Adrenal gland (tissue), 19 donors: ENCODE measurements at regions of chr7 and their contacts with region 1.

Region 1: DNA sequence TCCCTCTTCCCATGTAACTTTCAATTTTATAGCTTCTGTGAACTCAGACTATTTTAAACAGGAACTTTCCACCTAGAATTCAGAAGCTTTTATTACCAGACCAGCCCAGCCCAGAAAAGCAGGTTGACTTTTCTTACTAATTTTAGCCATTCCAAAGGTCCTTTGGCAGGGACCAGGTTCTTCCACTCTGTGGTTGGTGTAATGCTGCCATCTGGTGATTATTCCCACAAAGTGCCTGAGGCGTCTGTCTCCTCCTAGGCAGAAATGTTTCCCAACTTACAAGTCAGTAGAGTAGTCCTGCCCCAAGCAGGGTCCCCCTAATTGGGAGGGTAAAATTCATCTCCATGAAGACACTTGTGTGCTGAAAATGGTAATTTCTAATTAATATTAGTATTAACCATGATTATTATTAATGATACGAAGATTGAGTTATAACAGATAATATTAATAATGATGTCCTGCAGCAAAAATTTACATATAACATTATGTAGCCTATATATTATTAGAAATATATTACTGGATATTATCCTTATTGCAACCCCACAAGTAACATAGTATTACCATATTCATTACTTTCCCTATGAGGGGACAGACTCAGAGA is 53.0 kb upstream of the PPP1R17 start:
- DNase-seq: peak; percentile 40 to 74 (median 48)
- H3K4me3 ChIP-seq: no peak overlapping the region
- H3K27ac ChIP-seq: no peak overlapping the region
- H3K4me1 ChIP-seq: no peaks in the 10 kb centered on the region
- H3K27me3 ChIP-seq: no peaks in the 10 kb centered on the region
- CTCF ChIP-seq: peak; percentile 36 to 61 (median 55)
- POLR2A ChIP-seq: no peak

Region 2: DNA sequence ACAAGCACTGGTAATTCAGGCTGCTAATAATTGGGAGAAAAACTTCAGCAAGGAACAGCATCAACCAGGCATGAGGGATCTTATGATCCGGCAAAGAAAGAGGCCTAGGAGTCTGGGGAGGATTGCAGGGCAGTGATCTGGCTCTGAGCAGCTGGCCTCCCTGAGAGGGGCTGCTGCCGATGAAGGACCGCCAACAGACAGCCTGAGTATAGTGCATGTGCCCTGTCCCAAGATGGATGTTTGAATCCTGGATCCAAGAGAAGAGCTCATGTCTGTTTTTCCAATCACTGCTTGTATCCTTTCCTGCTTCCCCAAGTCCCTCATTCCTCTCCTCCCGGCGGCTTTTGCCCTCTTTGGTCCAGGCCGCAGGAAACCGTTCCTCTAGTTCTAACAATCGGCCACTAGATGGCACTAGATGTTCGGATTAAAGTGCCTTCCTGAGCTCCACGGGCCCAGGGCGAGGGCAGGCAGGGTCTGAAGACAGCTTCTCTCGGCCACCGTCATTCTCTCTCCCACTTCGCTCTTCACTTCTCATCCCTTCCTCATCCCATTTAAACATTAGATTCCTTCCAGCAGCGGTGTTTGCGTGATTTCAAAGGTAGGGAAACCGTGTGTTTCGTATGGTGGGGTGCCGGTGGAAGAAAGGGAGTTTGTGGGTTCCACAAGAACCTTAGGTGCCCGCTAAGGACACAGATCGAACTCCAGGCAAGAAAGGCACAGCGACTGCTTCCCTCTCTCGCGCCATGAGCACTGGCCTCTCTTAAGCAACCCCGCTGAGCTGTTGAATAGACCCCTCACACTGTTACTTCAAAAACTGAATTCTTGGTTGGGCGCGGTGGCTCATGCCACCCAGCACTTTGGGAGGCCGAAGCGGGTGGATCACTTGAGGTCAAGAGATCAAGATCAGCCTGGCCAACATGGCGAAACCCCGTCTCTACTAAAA is 499.5 kb before region 1 on chr7:
- intact Hi-C with region 1: loop called in 1 of 2 experiments (anchors 10 kb)
- DNase-seq: peak; percentile 60 to 84 (median 75)
- H3K4me3 ChIP-seq: no peak overlapping the region
- H3K27ac ChIP-seq: no peak overlapping the region
- H3K4me1 ChIP-seq: no peaks in the 10 kb centered on the region
- H3K27me3 ChIP-seq: no peaks in the 10 kb centered on the region
- CTCF ChIP-seq: peak; percentile 59 to 83 (median 74)
- POLR2A ChIP-seq: no peak

Region 3: DNA sequence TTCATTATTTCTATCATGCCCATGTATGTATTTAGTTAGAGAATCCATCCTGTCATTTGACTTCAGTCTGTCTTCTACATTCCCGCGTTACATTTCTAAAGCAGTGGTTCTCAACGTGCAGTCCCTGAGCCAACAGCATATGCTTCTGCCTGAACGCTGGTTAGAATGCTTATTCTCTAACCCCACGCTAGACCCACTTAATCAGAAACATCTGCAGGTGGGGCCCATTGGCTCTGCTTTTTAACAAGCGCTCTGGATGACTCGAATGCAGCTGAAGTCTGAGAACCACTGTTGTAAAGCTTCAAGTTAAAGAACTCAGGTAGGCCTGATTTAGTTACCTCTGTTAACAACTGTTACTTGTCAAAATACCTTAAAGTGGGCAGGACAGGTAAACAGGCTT is 331.6 kb before region 1 on chr7:
- intact Hi-C with region 1: no loop called
- DNase-seq: no peak
- H3K4me3 ChIP-seq: no peak overlapping the region
- H3K27ac ChIP-seq: no peak overlapping the region
- H3K4me1 ChIP-seq: no peaks in the 10 kb centered on the region
- H3K27me3 ChIP-seq: no peaks in the 10 kb centered on the region
- CTCF ChIP-seq: no peak
- POLR2A ChIP-seq: no peak

Region 4: DNA sequence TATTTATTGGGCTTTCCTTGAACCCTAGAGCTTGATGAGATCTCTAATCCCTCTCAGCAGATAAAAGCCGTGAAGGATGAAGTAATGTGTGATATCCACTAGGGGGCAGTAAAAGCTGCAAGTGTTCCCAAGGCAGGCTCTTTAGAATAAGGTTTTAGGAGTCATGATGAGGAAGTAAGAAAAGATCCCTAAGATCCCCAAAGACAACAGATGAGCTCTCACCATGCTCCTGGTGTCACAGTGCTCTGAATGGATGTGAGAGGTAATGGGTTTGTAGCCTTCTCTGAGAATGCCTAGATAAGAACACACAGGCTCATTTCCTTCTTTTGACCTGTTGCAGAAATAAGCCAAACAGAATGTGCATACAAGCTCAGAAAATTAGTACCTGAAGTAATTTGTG is 190.5 kb before region 1 on chr7:
- intact Hi-C with region 1: loop called in 1 of 2 experiments (anchors 10 kb)
- DNase-seq: peak in 2 of 7 donors; percentile 6 to 22
- H3K4me3 ChIP-seq: no peak overlapping the region
- H3K27ac ChIP-seq: no peak overlapping the region
- H3K4me1 ChIP-seq: no peaks in the 10 kb centered on the region
- H3K27me3 ChIP-seq: no peaks in the 10 kb centered on the region
- CTCF ChIP-seq: peak; percentile 49 to 85 (median 70)
- POLR2A ChIP-seq: no peak